A549 (cell line): ENCODE measurements at regions of chr5 and their contacts with region 1.

Region 1: GRCh38 chr5:160119142-160119904 is at the start of gene PWWP2A:
- DNase-seq: peak; percentile 99 to 100
- ATAC-seq: peak; percentile 93 to 97
- H3K4me3 ChIP-seq: peak within 1 kb of the TSS; percentile 85
- H3K27ac ChIP-seq: peak within 1 kb of the TSS; percentile 92 to 97
- H3K4me1 ChIP-seq: peaks cover 12% of the 10 kb centered on the region; the same call in 2 of the 3 replicates
- CTCF ChIP-seq: no peak; the same call in 2 of the 3 replicates
- EP300 ChIP-seq: no peak
- POLR2A ChIP-seq: peak; percentile 87
- RAD21 ChIP-seq: no peak
- polyA plus RNA-seq, gene PWWP2A: 10.9 and 15.2 TPM in 2 replicates

Region 2: DNA sequence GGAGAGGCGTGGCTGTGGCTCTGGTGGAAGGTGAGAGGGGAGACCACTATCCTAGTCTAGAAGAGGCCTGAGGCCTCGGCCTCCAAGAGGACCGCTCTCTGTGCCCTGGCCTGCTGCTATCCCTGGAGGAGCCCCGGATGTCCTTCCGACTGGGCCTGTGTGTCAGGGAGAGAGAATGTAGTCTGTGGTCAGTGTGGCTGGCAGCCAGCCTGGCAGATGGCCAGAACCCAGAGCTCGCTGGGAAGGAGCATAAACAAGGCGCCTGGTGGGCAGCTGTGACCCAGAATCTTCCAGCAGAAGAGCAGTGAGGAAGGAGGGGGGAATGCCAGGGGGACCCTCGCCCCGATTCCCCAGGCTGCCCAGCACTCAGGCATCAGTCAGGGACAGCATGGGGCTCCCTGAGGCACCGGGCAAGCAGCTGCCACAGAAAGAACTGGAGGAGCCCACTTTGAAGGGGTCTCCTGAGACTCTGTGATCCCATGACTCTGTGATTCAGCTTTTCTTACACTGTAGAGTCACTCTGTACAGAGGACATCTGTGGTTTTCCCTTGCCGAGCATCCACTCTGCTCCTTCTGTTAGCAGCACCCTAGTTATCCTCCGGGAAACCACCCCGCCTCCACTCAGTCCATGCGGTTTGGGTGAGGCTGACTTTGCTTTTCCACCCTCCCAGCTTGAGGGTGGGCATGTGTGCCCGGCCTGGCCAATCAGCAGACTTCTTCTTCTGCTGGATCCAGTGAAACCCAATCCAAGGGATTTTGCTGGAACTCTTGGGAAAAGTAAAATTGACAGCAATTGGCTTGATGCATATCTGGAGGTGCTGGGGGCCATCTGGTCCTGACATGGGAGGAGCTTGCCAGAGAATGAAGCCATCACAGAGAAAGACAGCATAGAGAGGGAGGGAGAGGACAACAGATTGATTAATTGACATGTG is 46.1 kb after region 1 on chr5:
- CTCF ChIA-PET with region 1: interaction called, 4 read pairs
- POLR2A ChIA-PET with region 1: interaction called, 13 read pairs
- DNase-seq: peak; percentile 95 to 96
- ATAC-seq: peak; percentile 92 to 95
- H3K4me3 ChIP-seq: peak overlapping the region; percentile 26; the same call in 1 of the 3 replicates
- H3K27ac ChIP-seq: peak overlapping the region; percentile 92 to 98
- H3K4me1 ChIP-seq: peaks cover 21% of the 10 kb centered on the region
- CTCF ChIP-seq: no peak
- EP300 ChIP-seq: no peak
- POLR2A ChIP-seq: peak; percentile 42
- RAD21 ChIP-seq: no peak